Activated CD4-positive, alpha-beta memory T cell treated with anti-CD3 and anti-CD28 coated beads, Interleukin-2, amount 10 ng/mL, durations not matched to agents 7 days and 5 days (primary cell): ENCODE measurements at regions of chr7 and their contacts with region 1.

Region 1: GRCh38 chr7:142811154-142811737 is 40.5 kb downstream of the PRSS2 start:
- DNase-seq: no peak
- H3K4me3 Mint-ChIP-seq: no peak overlapping the region
- H3K27ac Mint-ChIP-seq: peak overlapping the region; percentile 79
- H3K4me1 Mint-ChIP-seq: peaks cover 71% of the 10 kb centered on the region
- H3K27me3 Mint-ChIP-seq: peaks cover 3% of the 10 kb centered on the region

Region 2: DNA sequence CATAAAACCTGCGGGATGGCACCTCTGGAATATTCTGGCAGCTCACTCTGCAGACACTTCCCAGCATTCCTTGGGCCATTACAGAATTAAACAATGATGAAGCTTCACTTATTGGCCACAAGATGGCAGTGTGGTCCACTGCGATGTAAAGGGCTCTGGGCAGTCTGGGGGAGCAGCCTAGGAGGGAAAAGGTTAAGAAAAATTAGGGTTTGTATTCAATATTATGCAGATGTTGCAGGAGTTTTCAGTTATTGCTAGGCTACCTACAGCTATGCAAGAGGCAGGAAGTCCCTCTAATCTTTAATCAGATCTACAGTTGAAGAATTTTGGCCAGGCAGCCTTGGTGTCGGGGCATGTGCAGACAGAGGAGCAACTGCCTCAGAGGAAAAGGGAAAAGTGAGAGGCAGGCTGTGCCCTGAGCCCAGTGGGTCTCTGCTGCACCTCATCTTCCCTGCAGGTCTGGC is 295.2 kb before region 1 on chr7:
- CTCF ChIA-PET with region 1: interaction called, 11 read pairs
- POLR2A ChIA-PET with region 1: interaction called, 3 read pairs
- DNase-seq: peak; percentile 42
- H3K4me3 Mint-ChIP-seq: no peak overlapping the region
- H3K27ac Mint-ChIP-seq: no peak overlapping the region
- H3K4me1 Mint-ChIP-seq: peaks cover 31% of the 10 kb centered on the region
- H3K27me3 Mint-ChIP-seq: peaks cover 6% of the 10 kb centered on the region

Region 3: GRCh38 chr7:142603870-142604448 is 207.3 kb before region 1 on chr7:
- CTCF ChIA-PET with region 1: interaction called, 26 read pairs
- POLR2A ChIA-PET with region 1: interaction called, 18 read pairs
- DNase-seq: peak; percentile 51
- H3K4me3 Mint-ChIP-seq: no peak overlapping the region
- H3K27ac Mint-ChIP-seq: no peak overlapping the region
- H3K4me1 Mint-ChIP-seq: peaks cover 10% of the 10 kb centered on the region
- H3K27me3 Mint-ChIP-seq: peaks cover 11% of the 10 kb centered on the region

Region 4: DNA sequence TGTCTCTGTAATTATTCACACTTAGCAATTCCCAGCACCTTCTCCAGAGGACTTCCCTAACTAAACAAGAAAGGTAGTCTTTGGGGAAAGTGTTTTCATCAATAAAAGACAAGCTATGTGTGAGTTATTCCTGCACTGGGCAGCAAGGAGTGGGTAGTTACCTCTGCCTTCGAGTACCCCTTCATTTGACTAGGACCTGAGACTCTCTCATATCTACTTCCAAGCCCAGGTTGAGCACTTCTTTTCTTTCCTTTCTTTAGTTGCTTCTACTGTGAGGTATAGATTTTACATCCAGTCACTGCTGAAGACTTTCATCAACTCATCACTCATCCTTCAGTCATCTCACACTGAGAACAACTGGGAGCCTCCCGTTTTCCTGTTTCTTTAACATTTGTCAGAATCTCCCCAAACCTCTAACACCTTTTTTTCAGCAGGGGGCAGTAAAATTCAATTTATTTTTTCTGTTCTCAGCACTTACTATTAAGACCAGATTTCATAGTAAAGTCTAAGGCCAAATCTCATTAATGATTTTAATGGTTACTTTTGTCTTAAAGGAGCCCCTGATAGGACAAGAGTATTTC is 142.1 kb before region 1 on chr7:
- CTCF ChIA-PET with region 1: interaction called, 23 read pairs
- POLR2A ChIA-PET with region 1: interaction called, 3 read pairs
- DNase-seq: no peak
- H3K4me3 Mint-ChIP-seq: no peak overlapping the region
- H3K27ac Mint-ChIP-seq: peak overlapping the region; percentile 33
- H3K4me1 Mint-ChIP-seq: peaks cover 34% of the 10 kb centered on the region
- H3K27me3 Mint-ChIP-seq: no peaks in the 10 kb centered on the region

Region 5: GRCh38 chr7:142796608-142797385 is 14.4 kb before region 1 on chr7:
- CTCF ChIA-PET with region 1: interaction called, 300 read pairs
- POLR2A ChIA-PET with region 1: interaction called, 2,273 read pairs
- DNase-seq: no peak
- H3K4me3 Mint-ChIP-seq: peak overlapping the region; percentile 99
- H3K27ac Mint-ChIP-seq: peak overlapping the region; percentile 89
- H3K4me1 Mint-ChIP-seq: peaks cover 70% of the 10 kb centered on the region
- H3K27me3 Mint-ChIP-seq: no peaks in the 10 kb centered on the region

Region 6: DNA sequence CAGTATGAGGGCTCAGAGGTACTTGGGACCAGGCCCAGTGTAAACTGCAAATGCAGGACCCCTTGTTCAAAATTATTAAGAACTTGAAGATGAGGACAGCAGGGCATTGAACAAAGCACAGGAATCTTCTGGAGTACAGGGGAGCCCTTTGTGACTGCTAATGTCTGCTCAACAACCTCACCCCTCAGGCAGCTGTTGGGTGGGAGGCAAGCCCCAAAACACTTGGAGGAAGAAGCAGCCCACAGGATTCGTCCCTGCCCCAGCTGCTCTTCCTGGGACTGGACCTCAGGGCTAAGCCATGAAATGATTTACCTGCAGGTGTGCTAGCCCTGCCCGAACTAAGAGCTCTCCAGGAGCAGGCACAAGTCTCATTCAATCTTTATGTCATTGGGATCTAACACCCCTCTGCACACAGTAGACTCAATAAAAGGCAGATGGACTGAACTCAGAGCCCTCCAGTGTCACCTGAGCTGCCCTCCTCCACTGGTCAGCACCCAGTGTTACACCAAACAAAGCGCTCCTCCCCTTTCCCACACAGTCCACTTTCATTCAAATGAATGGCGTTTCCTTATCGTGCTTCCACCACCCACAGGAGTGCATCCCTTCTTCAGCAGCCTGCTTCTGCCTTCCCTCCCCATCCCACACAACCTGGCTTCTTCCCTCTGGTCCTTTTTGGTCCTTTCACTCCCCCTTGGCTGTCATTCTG is 121.3 kb after region 1 on chr7:
- CTCF ChIA-PET with region 1: no interaction called
- POLR2A ChIA-PET with region 1: no interaction called
- DNase-seq: no peak
- H3K4me3 Mint-ChIP-seq: no peak overlapping the region
- H3K27ac Mint-ChIP-seq: no peak overlapping the region
- H3K4me1 Mint-ChIP-seq: no peaks in the 10 kb centered on the region
- H3K27me3 Mint-ChIP-seq: peaks cover 6% of the 10 kb centered on the region

Region 7: GRCh38 chr7:142974626-142975025 is 163.4 kb after region 1 on chr7:
- CTCF ChIA-PET with region 1: no interaction called
- POLR2A ChIA-PET with region 1: no interaction called
- DNase-seq: no peak
- H3K4me3 Mint-ChIP-seq: no peak overlapping the region
- H3K27ac Mint-ChIP-seq: no peak overlapping the region
- H3K4me1 Mint-ChIP-seq: no peaks in the 10 kb centered on the region
- H3K27me3 Mint-ChIP-seq: peaks cover 13% of the 10 kb centered on the region